Activated CD8-positive, alpha-beta T cell treated with anti-CD3 and anti-CD28 coated beads, Interleukin-2, amount 10 ng/mL, durations not matched to agents 7 days and 5 days (primary cell): ENCODE measurements at regions of chr7 and their contacts with region 1.

Region 1: DNA sequence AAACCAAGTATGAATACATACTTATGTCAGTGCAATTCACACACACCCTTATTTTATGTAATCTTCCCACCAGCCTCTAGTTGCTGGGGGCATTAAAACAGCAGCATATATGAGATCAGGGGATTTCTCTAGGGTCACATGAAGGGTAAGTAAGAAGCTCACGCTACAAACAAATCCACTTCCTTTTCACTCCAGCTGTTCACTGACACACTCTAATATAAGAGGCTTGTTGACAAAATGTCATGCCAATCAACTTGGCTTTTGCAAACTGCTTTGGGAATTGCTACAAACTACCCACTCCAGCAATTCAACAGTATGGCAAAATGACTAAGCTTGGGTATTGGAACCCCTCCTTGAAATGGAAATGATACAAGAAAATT is 10.3 kb downstream of the FAM3C start:
- DNase-seq: no peak
- ATAC-seq: peak; percentile 73
- H3K4me3 Mint-ChIP-seq: no peak overlapping the region
- H3K27ac Mint-ChIP-seq: no peak overlapping the region
- H3K4me1 Mint-ChIP-seq: peaks cover 44% of the 10 kb centered on the region
- H3K27me3 Mint-ChIP-seq: no peaks in the 10 kb centered on the region

Region 2: DNA sequence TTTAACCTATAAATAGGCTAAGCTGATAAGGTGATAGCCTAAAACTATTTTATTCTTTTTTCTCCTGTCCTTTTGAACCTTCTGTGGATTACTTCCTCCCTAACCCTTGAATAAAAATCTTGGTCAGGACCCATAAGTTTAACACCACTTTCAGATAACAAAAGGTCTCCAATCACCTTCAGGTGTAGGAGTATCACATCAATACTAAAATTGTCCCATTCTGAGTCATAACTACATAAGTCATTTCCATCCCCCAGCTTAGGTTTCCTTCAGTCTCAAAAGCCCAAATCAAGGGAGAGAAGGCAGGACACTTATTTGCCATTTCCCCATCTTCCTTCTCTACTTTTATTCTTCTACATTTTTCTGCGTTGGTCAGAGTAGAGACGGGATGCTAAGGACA is 113.9 kb before region 1 on chr7:
- CTCF ChIA-PET with region 1: no interaction called
- POLR2A ChIA-PET with region 1: no interaction called
- DNase-seq: no peak
- ATAC-seq: no peak
- H3K4me3 Mint-ChIP-seq: no peak overlapping the region
- H3K27ac Mint-ChIP-seq: no peak overlapping the region
- H3K4me1 Mint-ChIP-seq: no peaks in the 10 kb centered on the region
- H3K27me3 Mint-ChIP-seq: no peaks in the 10 kb centered on the region

Region 3: DNA sequence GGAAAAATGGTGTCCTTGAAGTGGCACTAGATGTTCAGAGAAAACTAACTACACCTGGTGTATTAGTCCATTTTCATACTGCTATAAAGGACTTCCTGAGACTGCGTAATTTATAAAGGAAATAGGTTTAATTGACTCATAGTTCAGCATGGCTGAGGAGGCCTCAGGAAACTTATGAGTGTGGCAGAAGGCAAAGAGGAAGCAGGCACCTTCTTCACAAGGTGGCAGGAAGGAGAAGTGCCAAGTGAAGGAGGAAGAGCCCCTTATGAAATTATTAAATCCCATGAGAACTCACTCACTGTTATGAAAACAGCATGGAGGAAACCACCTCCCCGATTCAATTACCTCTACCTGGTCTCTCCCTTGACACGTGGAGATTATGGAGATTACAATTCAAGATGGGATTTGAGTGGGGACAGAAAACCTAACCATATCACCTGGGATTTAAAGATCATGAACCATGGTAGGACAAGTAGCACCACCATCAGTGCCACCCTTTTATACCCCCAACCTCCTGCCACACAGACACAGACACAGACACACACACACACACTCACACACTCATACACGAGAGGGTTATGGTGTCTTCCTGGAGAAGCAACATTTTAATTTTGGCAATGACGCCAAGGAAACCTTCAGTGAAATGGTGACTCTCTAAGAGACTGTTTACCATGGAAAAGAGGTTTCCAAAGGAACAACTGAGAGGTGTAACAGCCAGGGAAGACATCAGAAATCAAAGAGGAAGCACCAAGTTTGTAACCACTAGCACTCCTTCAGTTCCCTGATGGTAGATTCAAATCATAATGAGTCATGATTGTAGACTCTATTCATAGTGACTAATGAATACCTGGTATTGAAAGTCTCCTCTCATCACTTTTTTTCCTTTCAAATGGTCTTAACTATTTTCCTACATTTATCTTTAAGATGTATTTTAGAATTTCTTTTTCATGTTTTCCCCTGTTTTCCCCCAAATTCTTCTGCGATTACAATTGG is 98.8 kb before region 1 on chr7:
- CTCF ChIA-PET with region 1: no interaction called
- POLR2A ChIA-PET with region 1: no interaction called
- DNase-seq: no peak
- ATAC-seq: no peak
- H3K4me3 Mint-ChIP-seq: no peak overlapping the region
- H3K27ac Mint-ChIP-seq: no peak overlapping the region
- H3K4me1 Mint-ChIP-seq: no peaks in the 10 kb centered on the region
- H3K27me3 Mint-ChIP-seq: peaks cover 2% of the 10 kb centered on the region

Region 4: GRCh38 chr7:121372376-121373010 is 13.3 kb before region 1 on chr7:
- CTCF ChIA-PET with region 1: interaction called, 44 read pairs
- POLR2A ChIA-PET with region 1: interaction called, 3 read pairs
- DNase-seq: no peak
- ATAC-seq: peak; percentile 71
- H3K4me3 Mint-ChIP-seq: peak overlapping the region; percentile 3
- H3K27ac Mint-ChIP-seq: peak overlapping the region; percentile 69
- H3K4me1 Mint-ChIP-seq: peaks cover 40% of the 10 kb centered on the region
- H3K27me3 Mint-ChIP-seq: no peaks in the 10 kb centered on the region